Posterior cingulate gyrus (tissue), 11 donors: ENCODE measurements at regions of chr1 and their contacts with region 1.

Region 1: DNA sequence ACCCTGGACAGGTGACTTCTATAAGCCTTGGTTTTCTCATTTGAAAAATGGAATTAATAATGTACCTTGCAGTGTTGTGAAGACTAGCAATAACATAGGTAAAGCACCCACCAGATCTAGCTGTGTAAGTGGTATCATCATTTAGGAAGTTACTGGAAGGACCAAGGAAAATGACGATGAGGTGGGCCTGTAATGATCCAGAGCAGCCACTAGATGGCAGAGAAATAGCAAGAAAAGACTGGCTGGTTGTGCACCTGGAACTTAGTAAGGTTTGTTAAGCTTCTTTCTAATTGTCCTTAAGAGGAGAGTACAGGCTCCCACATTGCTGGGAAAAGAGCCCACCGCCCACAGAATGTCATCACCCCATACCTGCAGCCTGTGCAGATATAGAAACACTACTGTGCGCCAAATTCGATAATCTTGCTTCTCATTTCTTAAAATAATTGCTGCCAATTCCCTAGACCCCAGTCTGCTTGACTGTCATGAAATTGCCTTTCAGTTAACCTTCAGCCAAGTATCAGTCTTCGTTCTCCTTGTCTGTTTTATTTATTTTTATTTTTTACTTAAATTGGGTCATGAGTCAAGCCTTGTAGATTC is 37.2 kb downstream of the WNT4 start:
- DNase-seq: no peak

Region 2: GRCh38 chr1:22275721-22276395 is 170.1 kb after region 1 on chr1:
- intact Hi-C with region 1: loop called (anchors 5 kb)
- DNase-seq: peak in 9 of 10 donors; percentile 36 to 91 (median 48)